Activated CD4-positive, alpha-beta T cell treated with anti-CD3 and anti-CD28 coated beads, Interleukin-2, amount 10 ng/mL, durations not matched to agents 7 days and 5 days (primary cell): ENCODE measurements at regions of chr17 and their contacts with region 1.

Region 1: GRCh38 chr17:48024937-48025906 is 12.4 kb downstream of the COPZ2 start:
- DNase-seq: peak; percentile 99
- H3K4me3 Mint-ChIP-seq: peak overlapping the region; percentile 80
- H3K27ac Mint-ChIP-seq: peak overlapping the region; percentile 87
- H3K4me1 Mint-ChIP-seq: peaks cover 38% of the 10 kb centered on the region
- H3K27me3 Mint-ChIP-seq: peaks cover 21% of the 10 kb centered on the region

Region 2: GRCh38 chr17:47978324-47978723 is 46.9 kb before region 1 on chr17:
- CTCF ChIA-PET with region 1: interaction called, 11 read pairs
- POLR2A ChIA-PET with region 1: interaction called, 5 read pairs
- DNase-seq: peak; percentile 67
- H3K4me3 Mint-ChIP-seq: no peak overlapping the region
- H3K27ac Mint-ChIP-seq: no peak overlapping the region
- H3K4me1 Mint-ChIP-seq: peaks cover 16% of the 10 kb centered on the region
- H3K27me3 Mint-ChIP-seq: no peaks in the 10 kb centered on the region

Region 3: DNA sequence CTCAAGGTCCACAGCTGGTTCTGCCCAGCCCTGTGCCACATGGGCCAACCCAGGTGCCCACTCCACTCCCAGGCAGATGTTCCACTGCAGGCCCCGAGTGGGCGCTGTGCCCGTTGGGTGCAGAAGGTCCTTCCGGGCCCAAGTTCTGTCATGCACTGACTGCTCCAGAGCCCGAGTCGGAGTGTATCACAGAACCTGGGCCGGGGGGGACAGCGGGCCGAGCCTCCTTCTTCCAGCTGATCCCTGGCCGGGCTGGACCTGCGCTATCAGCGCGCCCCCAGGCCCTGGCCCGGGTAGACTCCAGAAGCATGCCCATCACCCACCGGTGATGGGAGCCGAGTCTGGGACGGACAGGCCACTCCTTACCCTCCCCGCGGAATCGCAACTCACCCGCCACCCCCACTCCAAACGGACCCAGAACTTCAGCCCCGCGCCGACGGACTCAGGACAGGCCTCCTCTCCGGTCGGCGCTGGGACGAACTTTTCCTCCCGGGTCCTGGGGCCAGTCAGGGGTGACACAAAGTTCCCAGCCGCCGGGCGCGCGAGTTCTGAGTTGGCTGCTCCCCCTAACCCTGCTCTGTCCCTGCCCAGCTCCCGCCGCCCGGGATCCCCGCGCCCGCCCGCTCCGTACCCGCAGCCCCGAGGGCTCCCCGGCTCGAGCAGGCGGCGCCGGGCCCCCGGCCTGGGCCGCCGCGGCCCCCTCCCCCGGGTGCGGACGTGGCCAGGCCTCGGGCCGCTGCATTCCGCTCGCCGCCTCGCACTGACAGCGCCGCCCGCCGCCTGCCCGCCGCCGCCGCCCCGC is 12.0 kb after region 1 on chr17 and contains the start of gene COPZ2:
- CTCF ChIA-PET with region 1: interaction called, 23 read pairs
- POLR2A ChIA-PET with region 1: no interaction called
- DNase-seq: peak; percentile 68
- H3K4me3 Mint-ChIP-seq: peak within 1 kb of the TSS; percentile 73
- H3K27ac Mint-ChIP-seq: peak within 1 kb of the TSS; percentile 61
- H3K4me1 Mint-ChIP-seq: peaks cover 20% of the 10 kb centered on the region
- H3K27me3 Mint-ChIP-seq: peaks cover 41% of the 10 kb centered on the region
- total RNA-seq, gene COPZ2: 3.4 to 4.0 TPM

Region 4: DNA sequence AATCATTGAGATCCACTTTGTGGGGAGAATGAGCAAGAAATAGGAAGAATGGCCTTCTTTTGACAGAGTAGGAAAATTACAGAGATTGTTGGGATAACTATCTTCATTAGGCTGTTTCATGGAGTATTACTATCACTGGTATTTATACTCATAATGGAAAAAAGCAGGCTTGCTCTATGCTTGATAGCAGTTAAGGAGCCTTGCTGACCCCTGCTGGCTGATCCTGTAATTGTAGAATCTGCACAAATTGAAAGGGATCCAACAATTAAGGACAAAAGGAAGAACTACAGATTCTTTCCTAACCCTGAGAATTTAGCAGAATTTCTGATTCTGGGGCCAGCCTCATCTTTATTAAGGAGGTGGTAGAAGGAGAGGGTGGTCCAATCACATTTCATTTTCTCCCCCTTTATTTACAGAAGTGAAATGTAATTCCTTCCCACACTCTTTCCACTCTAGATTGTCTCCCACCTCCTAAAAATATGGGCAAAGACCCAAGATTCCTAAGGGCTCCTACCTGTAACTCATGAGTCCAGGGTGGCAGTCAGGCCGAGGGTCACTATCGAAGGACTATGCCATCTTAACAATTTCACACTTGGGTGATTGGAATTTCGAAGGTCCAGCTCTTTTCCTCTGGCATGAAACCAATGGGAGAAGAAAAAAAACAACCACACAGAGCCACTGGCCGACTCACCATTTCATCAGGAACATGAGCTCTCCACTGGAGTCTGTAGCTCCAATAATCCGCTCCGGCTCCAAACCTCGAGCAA is 49.3 kb after region 1 on chr17:
- CTCF ChIA-PET with region 1: interaction called, 55 read pairs
- POLR2A ChIA-PET with region 1: no interaction called
- DNase-seq: peak; percentile 83
- H3K4me3 Mint-ChIP-seq: no peak overlapping the region
- H3K27ac Mint-ChIP-seq: peak overlapping the region; percentile 55
- H3K4me1 Mint-ChIP-seq: peaks cover 3% of the 10 kb centered on the region
- H3K27me3 Mint-ChIP-seq: no peaks in the 10 kb centered on the region